Ascending aorta (tissue), 2 donors: ENCODE measurements at regions of chr17 and their contacts with region 1.

Region 1: GRCh38 chr17:70552230-70552981 is 383.1 kb downstream of the KCNJ2 start:
- DNase-seq: no peak
- H3K4me3 ChIP-seq: no peak overlapping the region
- H3K27ac ChIP-seq: no peak overlapping the region
- H3K4me1 ChIP-seq: no peaks in the 10 kb centered on the region
- H3K27me3 ChIP-seq: no peaks in the 10 kb centered on the region
- CTCF ChIP-seq: peak; percentile 27 to 40 (median 40)

Region 2: DNA sequence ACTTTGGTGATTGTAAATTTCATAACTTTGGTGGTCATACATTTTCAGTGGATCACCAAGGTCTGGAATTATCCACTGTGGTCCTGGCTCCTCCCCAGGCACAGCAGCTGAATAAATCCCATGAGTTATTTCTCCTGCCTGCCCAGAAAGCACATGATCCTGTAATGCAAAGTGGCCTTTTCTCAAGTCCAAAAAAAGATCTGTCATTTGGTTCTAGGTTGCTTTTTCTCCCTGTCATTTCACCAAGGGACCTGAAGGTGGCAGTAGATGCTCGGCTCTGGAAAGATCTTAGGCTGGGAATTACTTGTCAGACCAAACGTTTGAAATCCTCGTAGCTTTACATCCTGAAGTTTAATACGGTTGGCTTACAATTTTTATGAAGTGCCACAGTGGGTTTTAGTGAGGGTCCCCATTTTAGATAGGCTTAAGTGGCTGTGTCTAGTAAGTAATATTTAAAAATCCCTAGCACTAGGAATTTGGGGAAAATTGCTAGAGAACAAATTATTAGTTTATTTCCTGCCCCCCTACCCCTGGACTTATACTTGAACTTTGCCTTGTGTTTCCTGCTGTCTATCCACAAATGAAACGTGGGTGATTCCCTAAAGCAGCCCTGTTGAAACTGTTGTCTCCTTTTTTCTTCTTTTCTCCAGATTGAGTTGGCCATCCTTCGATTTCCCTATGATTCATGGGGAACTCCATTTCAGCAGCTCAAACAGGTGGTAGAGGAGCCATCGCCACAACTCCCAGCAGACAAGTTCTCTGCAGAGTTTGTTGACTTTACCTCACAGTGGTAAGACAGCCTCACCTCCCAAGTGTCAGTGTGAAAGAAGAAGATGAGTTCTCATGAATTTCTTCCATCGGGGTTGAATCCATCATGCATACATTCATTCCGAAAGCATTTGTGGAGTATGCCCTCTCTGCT is 1026.2 kb before region 1 on chr17:
- intact Hi-C with region 1: loop called (anchors 5 kb)
- DNase-seq: peak in 1 of 2 donors; percentile 64
- H3K4me3 ChIP-seq: no peak overlapping the region
- H3K27ac ChIP-seq: no peak overlapping the region
- H3K4me1 ChIP-seq: no peaks in the 10 kb centered on the region
- H3K27me3 ChIP-seq: no peaks in the 10 kb centered on the region
- CTCF ChIP-seq: peak; percentile 46 to 90 (median 83)

Region 3: GRCh38 chr17:70013911-70014310 is 538.5 kb before region 1 on chr17:
- intact Hi-C with region 1: loop called (anchors 10 kb)
- DNase-seq: no peak
- H3K4me3 ChIP-seq: no peak overlapping the region
- H3K27ac ChIP-seq: no peak overlapping the region
- H3K4me1 ChIP-seq: no peaks in the 10 kb centered on the region
- H3K27me3 ChIP-seq: no peaks in the 10 kb centered on the region
- CTCF ChIP-seq: no peak

Region 4: GRCh38 chr17:70655176-70655958 is 103.0 kb after region 1 on chr17:
- intact Hi-C with region 1: no loop called
- DNase-seq: no peak
- H3K4me3 ChIP-seq: no peak overlapping the region
- H3K27ac ChIP-seq: no peak overlapping the region
- H3K4me1 ChIP-seq: no peaks in the 10 kb centered on the region
- H3K27me3 ChIP-seq: no peaks in the 10 kb centered on the region
- CTCF ChIP-seq: no peak

Region 5: GRCh38 chr17:70668276-70668937 is 116.0 kb after region 1 on chr17:
- intact Hi-C with region 1: no loop called
- DNase-seq: no peak
- H3K4me3 ChIP-seq: no peak overlapping the region
- H3K27ac ChIP-seq: no peak overlapping the region
- H3K4me1 ChIP-seq: no peaks in the 10 kb centered on the region
- H3K27me3 ChIP-seq: no peaks in the 10 kb centered on the region
- CTCF ChIP-seq: no peak